ENCODE measurements at regions of chr6 and their contacts with region 1.

Region 1: GRCh38 chr6:15691250-15691869 is 28.5 kb upstream of the DTNBP1 start:
- DNase-seq: peak; percentile 10
- H3K4me3 ChIP-seq: peak overlapping the region; percentile 37
- H3K27me3 ChIP-seq: no peaks in the 10 kb centered on the region
- CTCF ChIP-seq: peak; percentile 100

Region 2: DNA sequence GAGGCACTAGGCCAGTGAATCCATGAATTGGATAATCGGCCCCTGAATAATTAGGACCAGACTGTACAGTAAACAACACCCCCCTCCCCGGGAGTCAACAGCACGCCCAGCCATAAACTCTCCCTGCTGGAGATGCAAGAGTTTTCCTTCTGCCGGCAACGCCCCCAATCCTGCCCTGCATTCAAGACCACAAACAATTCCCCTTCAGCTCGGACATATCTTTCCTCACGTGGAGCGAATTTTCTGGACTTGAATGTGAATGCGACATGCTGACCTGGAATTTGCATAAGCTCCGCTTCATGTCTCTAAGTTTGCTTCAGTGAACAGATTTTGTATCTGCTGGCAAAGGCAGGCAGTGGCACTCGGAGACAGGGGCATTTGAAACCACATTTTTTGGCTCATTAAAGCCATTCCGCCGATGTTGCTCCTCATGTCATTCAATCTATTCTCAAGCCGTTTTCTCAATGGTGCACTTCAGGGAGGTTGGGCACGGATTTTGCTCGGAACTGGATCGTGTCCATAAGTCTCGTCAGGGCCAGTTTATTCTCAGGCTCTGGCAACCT is 509.0 kb after region 1 on chr6:
- CTCF ChIA-PET with region 1: interaction called, 25 read pairs
- POLR2A ChIA-PET with region 1: no interaction called
- DNase-seq: no peak
- H3K4me3 ChIP-seq: no peak overlapping the region
- H3K27me3 ChIP-seq: peaks cover 4% of the 10 kb centered on the region
- CTCF ChIP-seq: no peak

Region 3: GRCh38 chr6:16206595-16207037 is 515.3 kb after region 1 on chr6:
- CTCF ChIA-PET with region 1: interaction called, 25 read pairs
- POLR2A ChIA-PET with region 1: no interaction called
- DNase-seq: peak; percentile 56
- H3K4me3 ChIP-seq: no peak overlapping the region
- H3K27me3 ChIP-seq: peaks cover 3% of the 10 kb centered on the region; the same call in 1 of the 2 replicates
- CTCF ChIP-seq: peak; percentile 91

Measured in BJ (cell line).